Endothelial cell of umbilical vein (primary cell): ENCODE measurements at regions of chr16 and their contacts with region 1.

Region 1: GRCh38 chr16:30429678-30430427 is at the start of gene DCTPP1:
- DNase-seq: peak; percentile 97
- H3K4me3 ChIP-seq: peak within 1 kb of the TSS; percentile 40 to 73 (median 63)
- H3K27ac ChIP-seq: peak within 1 kb of the TSS; percentile 38
- H3K4me1 ChIP-seq: peaks cover 23% of the 10 kb centered on the region
- H3K27me3 ChIP-seq: peaks cover 0 to 4% of the 10 kb centered on the region in 2 experiments
- CTCF ChIP-seq: peak; percentile 66 to 78
- POLR2A ChIP-seq: peak; percentile 25
- total RNA-seq, gene DCTPP1: 65.2 and 68.0 TPM in 2 replicates

Region 2: GRCh38 chr16:30407102-30407803 is 22.6 kb before region 1 on chr16 and contains the start of gene ZNF771:
- CTCF ChIA-PET with region 1: interaction called, 13 read pairs
- POLR2A ChIA-PET with region 1: interaction called, 4 read pairs
- dilution Hi-C with region 1: no loop called
- intact Hi-C with region 1: no loop called
- DNase-seq: peak; percentile 88
- H3K4me3 ChIP-seq: peak within 1 kb of the TSS; percentile 29 to 56 (median 47)
- H3K27ac ChIP-seq: peak within 1 kb of the TSS; percentile 71
- H3K4me1 ChIP-seq: peaks cover 22% of the 10 kb centered on the region
- H3K27me3 ChIP-seq: no peaks in the 10 kb centered on the region
- CTCF ChIP-seq: no peak
- POLR2A ChIP-seq: peak; percentile 92
- total RNA-seq, gene ZNF771: 10.3 and 11.7 TPM in 2 replicates

Region 3: DNA sequence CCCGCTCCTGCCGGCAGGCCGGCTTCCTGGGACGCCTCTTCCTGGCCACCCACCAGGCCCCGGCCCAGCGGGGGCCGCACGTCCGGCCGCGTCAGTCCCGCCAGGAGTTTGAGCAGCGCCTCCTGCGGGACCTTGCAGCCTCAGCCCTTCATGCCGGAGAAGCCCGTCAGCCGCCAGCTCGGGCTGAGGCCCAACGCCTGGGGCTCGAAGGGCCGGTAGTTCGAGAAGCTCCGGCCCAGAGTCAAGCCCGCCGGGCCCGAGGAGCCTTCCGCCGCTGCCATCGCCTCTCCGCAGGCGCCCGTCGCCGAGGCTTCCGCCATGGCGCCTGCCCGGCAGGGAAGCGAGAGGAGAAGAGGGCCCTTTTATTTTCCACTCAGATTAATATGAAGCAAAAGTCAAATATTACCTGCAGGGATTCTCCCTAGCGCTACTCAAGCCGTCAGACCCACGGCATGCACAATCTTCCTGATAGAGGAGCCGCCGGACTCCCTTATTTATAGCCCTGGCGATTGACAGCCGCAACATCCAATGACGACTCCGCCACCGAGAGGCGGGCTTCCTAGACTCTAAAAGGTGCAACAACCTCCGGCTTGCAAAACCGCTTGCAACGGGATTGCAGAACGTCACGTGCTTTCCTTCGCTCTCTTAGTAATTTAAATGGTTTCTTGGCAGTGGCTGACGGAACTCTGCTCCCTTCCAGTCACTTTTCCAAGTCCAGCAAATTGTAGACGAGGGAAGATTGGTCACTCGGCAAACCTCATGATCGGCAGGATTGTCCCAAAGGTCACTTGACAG is 15.8 kb after region 1 on chr16 and contains the start of gene SEPHS2:
- CTCF ChIA-PET with region 1: interaction called, 15 read pairs
- POLR2A ChIA-PET with region 1: no interaction called
- dilution Hi-C with region 1: no loop called
- intact Hi-C with region 1: no loop called
- DNase-seq: peak; percentile 97
- H3K4me3 ChIP-seq: peak within 1 kb of the TSS; percentile 57 to 79 (median 68)
- H3K27ac ChIP-seq: peak within 1 kb of the TSS; percentile 72
- H3K4me1 ChIP-seq: peaks cover 11% of the 10 kb centered on the region
- H3K27me3 ChIP-seq: no peaks in the 10 kb centered on the region
- CTCF ChIP-seq: peak; percentile 29 to 53
- POLR2A ChIP-seq: peak; percentile 93
- total RNA-seq, gene SEPHS2: 32.0 and 32.8 TPM in 2 replicates

Region 4: DNA sequence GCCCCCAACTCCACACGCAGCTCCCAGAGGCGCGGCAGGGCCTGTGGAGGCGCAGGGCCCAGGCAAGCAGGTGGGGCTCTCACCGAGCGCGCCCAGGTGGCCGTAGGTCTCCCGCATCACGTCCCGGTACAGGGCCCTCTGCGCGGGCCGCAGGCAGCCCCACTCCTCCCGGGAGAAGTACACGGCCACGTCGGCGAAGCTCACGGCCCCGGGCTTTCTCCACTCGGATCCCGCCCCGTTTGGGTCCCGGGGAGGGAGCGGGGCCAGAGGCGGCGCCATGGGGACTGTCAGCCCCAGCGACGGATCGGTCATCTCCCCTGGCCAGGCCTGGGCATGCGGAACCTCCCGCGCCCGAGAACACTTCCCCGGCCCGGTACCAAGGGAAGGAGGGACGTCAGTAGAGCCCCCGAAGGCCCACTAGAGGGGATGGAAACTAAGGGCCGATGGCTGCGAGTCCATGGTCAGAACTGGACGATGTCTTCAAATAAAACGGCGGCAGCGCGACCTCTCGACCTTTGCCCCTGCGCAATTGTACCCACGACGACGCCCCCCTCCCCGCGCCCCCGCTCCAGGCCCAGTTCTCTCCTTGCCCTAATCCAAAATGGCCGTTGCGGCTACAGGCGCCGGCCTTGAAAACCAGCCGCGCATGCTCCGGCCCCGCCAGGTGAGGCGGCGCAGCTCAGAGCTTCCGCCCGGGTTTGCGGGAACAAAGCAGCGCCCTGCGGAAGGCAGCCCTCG is 104.7 kb after region 1 on chr16 and contains the start of gene ZNF747:
- CTCF ChIA-PET with region 1: interaction called, 26 read pairs
- POLR2A ChIA-PET with region 1: no interaction called
- dilution Hi-C with region 1: no loop called
- intact Hi-C with region 1: no loop called
- DNase-seq: peak; percentile 86
- H3K4me3 ChIP-seq: peak within 1 kb of the TSS; percentile 62 to 76 (median 67)
- H3K27ac ChIP-seq: peak within 1 kb of the TSS; percentile 76
- H3K4me1 ChIP-seq: peaks cover 14% of the 10 kb centered on the region
- H3K27me3 ChIP-seq: no peaks in the 10 kb centered on the region
- CTCF ChIP-seq: no peak
- POLR2A ChIP-seq: peak; percentile 76
- total RNA-seq, gene ZNF747: 7.2 and 8.6 TPM in 2 replicates

Region 5: DNA sequence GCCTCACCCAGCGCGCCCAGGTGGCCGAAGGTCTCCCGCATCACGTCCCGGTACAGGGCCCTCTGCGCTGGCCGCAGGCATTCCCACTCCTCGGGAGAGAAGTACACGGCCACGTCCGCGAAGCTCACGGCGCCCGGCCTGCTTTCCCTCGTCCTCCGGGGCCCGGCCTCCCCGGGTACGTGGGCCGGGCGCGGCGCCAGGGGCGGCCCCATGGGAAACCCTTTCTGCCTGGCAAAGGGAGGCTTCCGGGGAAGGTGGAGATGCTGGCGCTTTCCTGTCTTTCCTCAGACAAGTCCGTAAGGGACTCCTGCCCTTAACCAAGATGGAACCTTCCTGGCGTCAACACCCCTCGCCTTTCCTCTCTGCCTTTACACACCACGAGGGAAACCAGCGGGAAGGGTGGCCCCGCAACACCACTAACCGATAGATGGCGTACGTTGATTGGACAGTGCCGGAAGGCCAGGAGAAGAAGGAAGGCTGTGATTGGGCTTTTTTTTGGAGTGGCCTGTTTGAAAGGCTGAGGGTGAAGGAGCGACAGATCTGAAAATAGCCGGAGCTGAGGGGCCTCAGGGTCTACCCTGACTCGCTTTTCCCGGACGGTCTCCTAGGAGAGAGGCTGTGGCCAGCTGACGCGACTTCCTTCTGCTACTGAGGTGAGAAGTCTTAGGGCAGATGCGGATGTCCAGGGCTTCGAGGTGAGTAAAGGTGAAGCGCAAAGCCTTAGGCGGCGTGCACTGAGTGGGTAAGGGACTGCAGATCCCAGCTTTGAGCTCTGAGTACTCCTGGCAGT is 155.7 kb after region 1 on chr16 and contains the start of gene ZNF785:
- CTCF ChIA-PET with region 1: interaction called, 3 read pairs
- POLR2A ChIA-PET with region 1: no interaction called
- dilution Hi-C with region 1: no loop called
- intact Hi-C with region 1: loop called (anchors 1 kb)
- DNase-seq: peak; percentile 99
- H3K4me3 ChIP-seq: peak within 1 kb of the TSS; percentile 56 to 77 (median 72)
- H3K27ac ChIP-seq: peak within 1 kb of the TSS; percentile 49
- H3K4me1 ChIP-seq: peaks cover 7% of the 10 kb centered on the region
- H3K27me3 ChIP-seq: no peaks in the 10 kb centered on the region
- CTCF ChIP-seq: no peak
- POLR2A ChIP-seq: peak; percentile 55
- total RNA-seq, gene ZNF785: 17.6 and 21.9 TPM in 2 replicates

Region 6: DNA sequence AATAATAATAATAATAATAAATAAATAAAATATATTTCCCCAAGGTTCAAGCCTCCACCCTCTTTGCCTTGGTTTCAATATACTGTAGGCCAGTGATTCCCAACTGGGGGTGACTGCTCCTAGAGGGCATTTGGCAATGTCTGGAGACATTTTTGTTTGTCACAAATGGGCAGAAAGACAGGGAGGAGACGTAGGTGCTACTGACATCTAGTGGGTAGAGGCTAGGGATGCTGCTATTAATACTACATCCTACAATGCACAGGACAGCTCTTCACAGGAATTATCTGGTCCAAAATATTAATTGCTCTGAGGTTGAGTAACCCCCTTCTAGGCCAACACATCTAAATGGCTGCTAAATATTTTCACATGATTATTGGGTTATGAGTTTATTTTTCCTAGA is 208.1 kb after region 1 on chr16:
- CTCF ChIA-PET with region 1: interaction called, 11 read pairs
- POLR2A ChIA-PET with region 1: interaction called, 4 read pairs
- dilution Hi-C with region 1: no loop called
- intact Hi-C with region 1: no loop called
- DNase-seq: peak; percentile 50
- H3K4me3 ChIP-seq: no peak overlapping the region
- H3K27ac ChIP-seq: no peak overlapping the region
- H3K4me1 ChIP-seq: peaks cover 6% of the 10 kb centered on the region
- H3K27me3 ChIP-seq: no peaks in the 10 kb centered on the region
- CTCF ChIP-seq: peak; percentile 32 to 44
- POLR2A ChIP-seq: no peak